MCF 10A (cell line): ENCODE measurements at regions of chr9 and their contacts with region 1.

Region 1: DNA sequence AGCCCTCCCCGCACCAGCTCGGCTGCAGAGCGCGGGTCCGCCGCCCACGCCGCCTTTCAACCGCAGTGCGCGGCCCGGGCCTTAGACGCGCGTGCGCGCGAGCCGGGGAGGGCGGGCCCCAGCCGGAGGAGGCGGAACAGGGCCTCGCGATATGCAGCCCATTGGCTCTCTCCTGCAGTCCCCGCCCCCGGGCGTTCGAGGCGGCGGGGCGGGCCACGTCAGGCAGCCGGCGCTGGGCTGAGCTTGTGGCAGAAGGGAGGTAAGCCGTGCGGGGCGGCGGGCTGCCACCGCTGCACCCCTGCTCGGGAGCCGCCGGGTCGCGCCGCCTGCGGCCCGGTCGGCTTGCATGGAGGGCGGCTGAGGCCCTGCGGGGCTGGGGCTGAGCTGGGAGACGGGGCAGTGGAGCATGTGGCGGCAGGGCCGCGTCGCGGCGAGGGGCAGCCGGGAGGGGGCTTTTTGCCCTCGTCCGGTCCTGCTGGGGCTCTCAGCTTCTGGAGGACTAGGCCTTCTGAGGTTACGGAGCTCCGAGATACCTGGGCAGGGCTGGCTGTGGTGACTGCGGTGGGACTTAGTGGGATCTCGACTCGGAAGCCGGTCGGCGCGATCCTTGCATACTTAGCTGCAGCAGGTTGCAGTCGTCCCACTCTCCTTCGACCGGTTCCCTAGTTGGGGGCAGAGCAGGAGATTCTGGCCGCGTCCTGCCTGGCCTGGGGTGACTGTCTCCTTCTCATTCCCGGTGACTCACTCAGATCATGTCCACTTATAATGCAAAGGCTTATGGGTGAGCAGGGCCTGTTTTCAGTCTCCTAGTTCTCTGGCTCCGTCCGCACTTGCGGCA is at the start of gene FOCAD:
- DNase-seq: peak; percentile 95
- H3K4me3 Mint-ChIP-seq: peak within 1 kb of the TSS; percentile 82
- H3K27ac Mint-ChIP-seq: peak within 1 kb of the TSS; percentile 73
- H3K4me1 Mint-ChIP-seq: peaks cover 22% of the 10 kb centered on the region
- H3K27me3 Mint-ChIP-seq: no peaks in the 10 kb centered on the region
- CTCF ChIP-seq: no peak
- total RNA-seq, gene FOCAD: 20.7 and 23.6 TPM in 2 replicates

Region 2: GRCh38 chr9:20640331-20641187 is 43.7 kb before region 1 on chr9:
- CTCF ChIA-PET with region 1: no interaction called
- POLR2A ChIA-PET with region 1: interaction called, 20 read pairs
- intact Hi-C with region 1: no loop called
- DNase-seq: peak; percentile 89
- H3K4me3 Mint-ChIP-seq: no peak overlapping the region
- H3K27ac Mint-ChIP-seq: no peak overlapping the region
- H3K4me1 Mint-ChIP-seq: peaks cover 6% of the 10 kb centered on the region
- H3K27me3 Mint-ChIP-seq: peaks cover 68% of the 10 kb centered on the region
- CTCF ChIP-seq: no peak

Region 3: GRCh38 chr9:20658677-20659473 is 25.4 kb before region 1 on chr9:
- CTCF ChIA-PET with region 1: no interaction called
- POLR2A ChIA-PET with region 1: interaction called, 34 read pairs
- intact Hi-C with region 1: no loop called
- DNase-seq: peak; percentile 16
- H3K4me3 Mint-ChIP-seq: no peak overlapping the region
- H3K27ac Mint-ChIP-seq: peak overlapping the region; percentile 52
- H3K4me1 Mint-ChIP-seq: no peaks in the 10 kb centered on the region
- H3K27me3 Mint-ChIP-seq: peaks cover 30% of the 10 kb centered on the region
- CTCF ChIP-seq: no peak

Region 4: GRCh38 chr9:20884985-20885593 is 200.8 kb after region 1 on chr9:
- CTCF ChIA-PET with region 1: no interaction called
- POLR2A ChIA-PET with region 1: interaction called, 3 read pairs
- intact Hi-C with region 1: loop called (anchors 10 kb)
- DNase-seq: peak; percentile 65
- H3K4me3 Mint-ChIP-seq: no peak overlapping the region
- H3K27ac Mint-ChIP-seq: no peak overlapping the region
- H3K4me1 Mint-ChIP-seq: no peaks in the 10 kb centered on the region
- H3K27me3 Mint-ChIP-seq: no peaks in the 10 kb centered on the region
- CTCF ChIP-seq: peak; percentile 48